ENCODE measurements at regions of chr12 and their contacts with region 1.

Region 1: GRCh38 chr12:93098077-93098476 is 169.0 kb upstream of the EEA1 start:
- DNase-seq: peak; percentile 51
- ATAC-seq: peak; percentile 80
- H3K4me3 ChIP-seq: no peak overlapping the region
- H3K27ac ChIP-seq: no peak overlapping the region
- H3K4me1 ChIP-seq: peaks cover 20% of the 10 kb centered on the region
- H3K27me3 ChIP-seq: no peaks in the 10 kb centered on the region
- CTCF ChIP-seq: peak; percentile 36 to 54 (median 52)
- EP300 ChIP-seq: no peak
- POLR2A ChIP-seq: no peak
- RAD21 ChIP-seq: peak; percentile 80

Region 2: GRCh38 chr12:92995258-92995903 is 102.7 kb before region 1 on chr12:
- CTCF ChIA-PET with region 1: interaction called, 10 read pairs
- POLR2A ChIA-PET with region 1: no interaction called
- RAD21 ChIA-PET with region 1: interaction called, 4 read pairs
- SMC1A ChIA-PET with region 1: interaction called, 3 read pairs
- in situ Hi-C with region 1: no loop called
- intact Hi-C with region 1: no loop called
- DNase-seq: peak; percentile 87
- ATAC-seq: peak; percentile 94
- H3K4me3 ChIP-seq: peak overlapping the region; percentile 49
- H3K27ac ChIP-seq: peak overlapping the region; percentile 84
- H3K4me1 ChIP-seq: peaks cover 30% of the 10 kb centered on the region
- H3K27me3 ChIP-seq: no peaks in the 10 kb centered on the region
- CTCF ChIP-seq: no peak
- EP300 ChIP-seq: no peak
- POLR2A ChIP-seq: no peak
- RAD21 ChIP-seq: no peak

Region 3: GRCh38 chr12:93060666-93061471 is 37.2 kb before region 1 on chr12:
- CTCF ChIA-PET with region 1: interaction called, 4 read pairs
- POLR2A ChIA-PET with region 1: interaction called, 3 read pairs
- RAD21 ChIA-PET with region 1: interaction called, 10 read pairs
- SMC1A ChIA-PET with region 1: interaction called, 5 read pairs
- in situ Hi-C with region 1: no loop called
- intact Hi-C with region 1: loop called (anchors 2 kb)
- DNase-seq: peak; percentile 21
- ATAC-seq: peak; percentile 61
- H3K4me3 ChIP-seq: 0 out of 2 replicates have a peak overlapping the region, but pooled peaks have one; percentile 2
- H3K27ac ChIP-seq: peak overlapping the region; percentile 61
- H3K4me1 ChIP-seq: peaks cover 26% of the 10 kb centered on the region
- H3K27me3 ChIP-seq: no peaks in the 10 kb centered on the region
- CTCF ChIP-seq: no peak
- EP300 ChIP-seq: peak in 1 of 2 experiments; percentile 29; a peak in 1 of 4 replicates
- POLR2A ChIP-seq: no peak
- RAD21 ChIP-seq: peak; percentile 8; the same call in 1 of the 2 replicates

Region 4: GRCh38 chr12:93121729-93122488 is 23.8 kb after region 1 on chr12:
- CTCF ChIA-PET with region 1: interaction called, 4 read pairs
- POLR2A ChIA-PET with region 1: no interaction called
- RAD21 ChIA-PET with region 1: interaction called, 3 read pairs
- SMC1A ChIA-PET with region 1: interaction called, 13 read pairs
- in situ Hi-C with region 1: no loop called
- intact Hi-C with region 1: no loop called
- DNase-seq: no peak
- ATAC-seq: no peak
- H3K4me3 ChIP-seq: no peak overlapping the region
- H3K27ac ChIP-seq: no peak overlapping the region
- H3K4me1 ChIP-seq: peaks cover 14% of the 10 kb centered on the region
- H3K27me3 ChIP-seq: no peaks in the 10 kb centered on the region
- CTCF ChIP-seq: no peak
- EP300 ChIP-seq: no peak
- POLR2A ChIP-seq: no peak
- RAD21 ChIP-seq: no peak

Region 5: DNA sequence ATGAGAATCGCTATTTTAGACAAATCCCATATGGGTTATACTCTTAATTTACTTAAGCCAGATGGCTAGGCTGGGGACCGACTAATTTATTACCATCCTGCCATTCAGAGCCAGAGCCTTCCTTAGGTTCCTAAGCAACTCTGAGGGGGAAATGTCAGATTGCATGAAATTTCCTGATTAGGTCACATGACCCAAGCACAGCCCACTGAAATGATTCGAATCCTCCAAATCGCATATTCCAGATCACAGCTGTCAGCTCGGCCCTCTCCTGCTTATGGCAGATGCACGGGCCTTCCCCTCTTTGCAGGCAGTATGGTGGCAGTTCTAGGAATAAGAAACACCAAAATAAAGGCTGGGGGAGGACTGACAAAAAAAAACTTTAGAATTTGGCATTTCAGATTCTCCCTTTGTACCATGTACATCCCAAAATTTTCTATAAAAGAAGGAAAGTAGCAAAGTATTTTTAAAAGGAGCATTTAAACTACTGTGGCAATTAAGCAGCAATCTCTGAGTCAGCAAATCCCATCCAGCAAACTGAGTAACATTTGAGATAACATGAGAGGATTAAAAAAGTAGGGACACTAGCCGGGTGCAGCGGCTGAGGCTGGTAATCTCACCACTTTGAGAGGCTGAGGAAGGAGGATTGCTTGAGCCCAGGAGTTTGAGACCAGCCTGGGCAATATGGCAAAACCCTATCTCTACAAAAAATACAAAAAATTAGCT is 249.1 kb after region 1 on chr12:
- CTCF ChIA-PET with region 1: no interaction called
- POLR2A ChIA-PET with region 1: no interaction called
- RAD21 ChIA-PET with region 1: no interaction called
- SMC1A ChIA-PET with region 1: no interaction called
- in situ Hi-C with region 1: no loop called
- intact Hi-C with region 1: no loop called
- DNase-seq: no peak
- ATAC-seq: no peak
- H3K4me3 ChIP-seq: no peak overlapping the region
- H3K27ac ChIP-seq: no peak overlapping the region
- H3K4me1 ChIP-seq: no peaks in the 10 kb centered on the region
- H3K27me3 ChIP-seq: no peaks in the 10 kb centered on the region
- CTCF ChIP-seq: no peak
- EP300 ChIP-seq: no peak
- POLR2A ChIP-seq: no peak
- RAD21 ChIP-seq: no peak

Region 6: GRCh38 chr12:93387780-93388179 is 289.7 kb after region 1 on chr12:
- CTCF ChIA-PET with region 1: interaction called, 90 read pairs
- POLR2A ChIA-PET with region 1: interaction called, 4 read pairs
- RAD21 ChIA-PET with region 1: interaction called, 107 read pairs
- SMC1A ChIA-PET with region 1: interaction called, 102 read pairs
- in situ Hi-C with region 1: no loop called
- intact Hi-C with region 1: loop called (anchors 2 kb)
- DNase-seq: no peak
- ATAC-seq: peak; percentile 76
- H3K4me3 ChIP-seq: peak overlapping the region; percentile 6
- H3K27ac ChIP-seq: peak overlapping the region; percentile 35; the same call in 1 of the 2 replicates
- H3K4me1 ChIP-seq: peaks cover 27% of the 10 kb centered on the region
- H3K27me3 ChIP-seq: no peaks in the 10 kb centered on the region
- CTCF ChIP-seq: no peak
- EP300 ChIP-seq: no peak
- POLR2A ChIP-seq: no peak
- RAD21 ChIP-seq: no peak

Region 7: DNA sequence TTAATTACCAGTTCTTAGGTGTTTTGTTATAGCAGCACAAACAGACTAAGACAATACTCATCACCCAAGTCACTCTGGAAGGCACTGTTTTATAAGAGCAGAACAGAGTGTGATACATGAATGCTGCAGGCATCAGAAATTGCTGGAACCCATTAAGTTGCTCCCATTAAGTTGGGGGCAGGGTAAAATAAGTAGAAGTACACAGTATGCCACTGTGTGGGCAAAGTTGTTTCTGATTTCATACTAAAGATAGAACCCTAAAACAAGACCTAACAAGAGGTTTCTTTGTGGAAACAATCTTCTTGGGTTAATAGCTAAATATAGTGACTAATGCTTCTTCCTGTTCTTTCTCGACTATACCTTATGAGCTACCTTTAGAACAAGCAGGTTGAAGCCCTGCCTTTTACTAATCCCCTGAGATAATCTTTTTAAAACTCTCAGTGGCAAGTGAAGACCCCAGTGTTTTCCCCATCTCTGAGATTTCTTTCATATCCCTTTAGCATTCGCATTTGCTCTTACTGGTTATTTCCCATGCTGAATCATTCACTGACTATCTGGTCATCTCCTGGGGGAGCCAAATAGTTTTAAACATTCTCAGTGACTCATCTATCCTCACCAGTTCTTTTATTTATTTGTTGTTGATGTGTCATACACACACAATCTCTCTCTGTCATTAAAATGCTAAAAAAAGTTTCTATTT is 526.7 kb after region 1 on chr12:
- CTCF ChIA-PET with region 1: no interaction called
- POLR2A ChIA-PET with region 1: no interaction called
- RAD21 ChIA-PET with region 1: no interaction called
- SMC1A ChIA-PET with region 1: no interaction called
- in situ Hi-C with region 1: no loop called
- intact Hi-C with region 1: no loop called
- DNase-seq: peak; percentile 63
- ATAC-seq: peak; percentile 90
- H3K4me3 ChIP-seq: no peak overlapping the region
- H3K27ac ChIP-seq: 0 out of 2 replicates have a peak overlapping the region, but pooled peaks have one; percentile 35
- H3K4me1 ChIP-seq: no peaks in the 10 kb centered on the region
- H3K27me3 ChIP-seq: no peaks in the 10 kb centered on the region
- CTCF ChIP-seq: no peak
- EP300 ChIP-seq: peak in 1 of 2 experiments; percentile 75; a peak in 2 of 4 replicates
- POLR2A ChIP-seq: no peak
- RAD21 ChIP-seq: no peak

Measured in GM12878 (cell line).